GM10248 (cell line): ENCODE measurements at regions of chr10 and their contacts with region 1.

Region 1: GRCh38 chr10:101095542-101096213 is 33.9 kb downstream of the KAZALD1 start:
- DNase-seq: peak; percentile 86
- CTCF ChIP-seq: peak; percentile 84

Region 2: DNA sequence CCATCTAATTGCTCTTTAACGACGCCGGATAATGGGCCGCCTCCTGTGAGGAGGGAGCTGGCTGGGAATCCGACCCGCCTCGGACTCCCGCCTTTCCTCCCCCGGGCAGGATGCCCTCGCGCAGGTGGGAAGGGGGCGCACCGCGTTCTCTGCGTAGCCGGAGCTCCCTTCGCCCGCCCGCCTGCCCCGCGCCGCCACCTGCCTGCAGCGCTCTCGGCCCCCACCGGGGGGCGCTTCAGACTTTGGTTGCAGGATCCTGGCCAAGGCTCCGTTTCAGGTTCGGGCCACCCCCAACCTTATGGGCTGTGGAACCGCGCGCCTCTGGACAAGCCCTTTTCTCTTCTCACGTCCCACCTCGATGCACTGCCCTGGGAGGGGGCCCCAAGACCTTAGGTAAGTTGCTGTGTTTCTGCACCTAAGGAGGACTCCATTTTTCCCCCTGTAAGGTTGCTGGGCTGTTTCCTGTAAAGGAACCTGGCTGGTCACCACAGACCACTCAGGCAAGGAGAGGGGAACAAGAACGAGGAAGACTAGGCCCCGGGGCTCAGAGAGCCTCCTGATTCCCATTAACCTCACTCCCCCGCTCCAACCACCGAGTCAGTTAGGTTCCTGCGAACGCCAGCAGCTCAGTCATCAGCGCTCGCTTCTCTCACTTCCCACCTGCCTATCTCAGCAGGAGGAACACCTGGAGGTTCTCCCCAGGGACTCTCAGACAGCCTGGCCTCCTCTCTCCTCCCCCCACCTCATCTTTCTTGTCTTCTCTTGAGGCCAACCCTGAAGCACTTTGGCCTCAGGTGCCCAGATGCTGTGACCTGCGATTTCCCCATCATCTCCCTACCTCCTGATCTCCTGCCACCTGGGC is 45.2 kb before region 1 on chr10:
- CTCF ChIA-PET with region 1: interaction called, 23 read pairs
- POLR2A ChIA-PET with region 1: no interaction called
- DNase-seq: peak; percentile 85
- CTCF ChIP-seq: peak; percentile 82

Region 3: DNA sequence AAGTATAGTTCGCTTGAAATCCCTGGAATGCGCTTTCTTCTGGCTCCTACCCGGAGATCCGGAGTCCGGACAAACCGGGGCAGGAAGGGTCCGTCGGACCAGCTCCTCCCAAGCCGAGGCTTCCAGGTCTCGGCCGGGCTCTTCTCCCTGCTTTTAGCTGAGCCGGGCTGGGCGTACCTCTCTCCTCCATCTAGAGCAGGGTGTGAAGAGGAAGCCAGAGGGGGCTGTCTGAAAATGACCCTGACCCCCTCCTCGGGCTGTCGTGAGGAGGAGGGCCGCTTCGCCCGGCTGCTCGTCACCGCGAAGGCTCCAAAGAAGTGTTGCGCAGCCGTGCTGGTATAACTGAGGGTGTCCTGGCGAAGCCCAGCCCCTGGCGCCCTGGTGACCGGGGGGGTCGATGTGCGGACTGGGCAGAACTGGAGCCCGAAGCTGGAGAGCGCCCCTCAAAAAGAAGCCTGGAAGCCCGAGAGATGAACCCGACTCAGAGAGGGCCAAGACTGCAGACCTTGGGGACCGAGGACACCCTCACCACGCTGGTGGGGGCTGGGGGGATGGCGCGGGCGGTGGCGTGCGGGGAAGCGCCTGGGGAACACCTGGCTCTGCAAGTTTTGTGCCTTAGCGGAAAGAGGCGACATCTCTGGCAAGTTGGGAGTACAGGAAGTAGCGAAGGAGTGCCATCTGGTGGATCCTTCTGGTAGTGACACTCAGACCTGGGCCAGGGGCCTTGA is 28.2 kb before region 1 on chr10:
- CTCF ChIA-PET with region 1: interaction called, 12 read pairs
- POLR2A ChIA-PET with region 1: no interaction called
- DNase-seq: peak; percentile 84
- CTCF ChIP-seq: peak; percentile 78

Region 4: DNA sequence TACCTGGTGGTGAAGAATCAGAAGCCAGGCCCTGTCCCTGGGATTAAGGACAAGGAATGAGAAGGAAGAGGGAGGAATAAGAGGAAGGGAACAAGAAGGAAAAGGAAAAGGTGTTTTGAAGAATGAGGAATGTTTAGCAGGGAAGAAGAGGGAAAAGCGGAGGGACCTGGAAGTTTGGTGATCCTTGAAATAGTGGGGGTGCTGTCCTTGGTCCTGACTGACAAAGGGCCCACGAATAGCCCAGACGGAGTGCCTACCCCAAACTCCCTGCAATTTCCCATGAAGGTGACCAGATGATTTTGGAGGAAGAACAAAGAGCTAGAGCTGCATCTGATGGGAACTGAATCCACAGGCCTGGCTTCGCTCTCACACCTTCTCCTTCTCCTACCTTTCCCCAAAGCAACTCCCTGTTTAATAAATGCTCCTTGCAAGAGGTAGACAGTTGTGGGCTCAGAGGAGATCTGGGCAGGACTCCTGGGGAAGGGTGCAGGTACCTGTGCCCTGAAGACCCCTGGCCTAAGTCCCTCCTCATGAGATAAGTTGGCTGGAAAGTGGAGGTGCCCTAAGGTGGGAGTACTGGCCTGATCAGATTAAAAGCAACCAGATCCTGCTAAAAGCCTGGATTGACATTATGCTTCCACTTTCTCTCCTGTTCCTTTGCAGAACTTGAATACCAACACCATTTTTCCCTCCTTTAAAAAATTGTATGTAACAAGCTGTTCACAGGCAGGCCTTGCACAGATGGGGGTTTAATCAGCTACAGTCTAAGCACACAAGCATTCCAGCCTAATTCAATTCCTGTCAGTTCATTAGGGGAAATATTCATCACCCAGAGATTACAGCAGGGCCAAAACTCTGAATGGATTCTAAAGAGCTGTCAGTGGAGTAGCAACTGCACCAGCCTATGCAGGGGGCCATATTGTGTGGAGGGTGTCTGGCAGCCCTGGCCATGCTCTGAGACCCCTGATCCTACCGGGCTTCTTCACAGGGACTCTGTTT is 14.4 kb before region 1 on chr10:
- CTCF ChIA-PET with region 1: interaction called, 70 read pairs
- POLR2A ChIA-PET with region 1: no interaction called
- DNase-seq: peak; percentile 39
- CTCF ChIP-seq: no peak

Region 5: GRCh38 chr10:101110856-101111546 is 15.3 kb after region 1 on chr10:
- CTCF ChIA-PET with region 1: interaction called, 37 read pairs
- POLR2A ChIA-PET with region 1: no interaction called
- DNase-seq: no peak
- CTCF ChIP-seq: no peak

Region 6: DNA sequence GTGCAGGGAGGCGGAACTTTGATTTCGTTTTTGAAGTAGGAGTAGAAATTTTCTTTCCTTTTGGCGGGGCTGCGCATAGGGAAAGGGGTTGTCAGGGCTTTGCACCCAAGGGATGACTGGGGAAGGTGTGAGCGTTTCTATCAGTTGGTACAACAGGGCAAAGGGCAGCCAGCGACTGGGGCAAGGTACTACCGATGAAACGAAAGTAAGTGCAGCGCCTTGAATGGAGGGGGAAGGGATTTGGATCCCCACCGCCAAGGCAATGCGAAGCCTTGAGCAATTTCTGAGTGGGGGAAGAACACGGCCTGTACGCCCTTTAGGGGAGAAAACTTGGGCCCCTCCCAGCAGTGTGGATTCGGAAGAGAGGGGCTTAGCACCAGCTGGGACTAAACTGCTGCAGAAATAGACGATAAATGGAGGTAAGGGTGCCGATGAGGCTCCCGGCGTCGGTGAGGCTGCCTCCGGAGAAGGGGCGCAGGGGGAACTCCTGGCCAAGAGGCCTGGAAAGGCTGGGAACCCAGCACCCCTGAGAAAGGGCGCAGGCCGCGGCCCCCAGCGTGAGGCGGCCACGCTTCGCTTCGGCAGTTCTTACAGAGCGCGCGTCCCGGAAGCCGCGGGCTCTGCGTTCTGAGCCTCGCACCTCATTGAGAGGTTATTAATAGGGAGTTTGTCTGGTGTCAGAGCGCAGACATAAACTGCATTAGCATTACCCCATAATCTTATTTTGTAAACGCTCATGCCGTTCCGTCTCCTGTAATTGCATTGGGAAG is 25.4 kb after region 1 on chr10:
- CTCF ChIA-PET with region 1: interaction called, 50 read pairs
- POLR2A ChIA-PET with region 1: no interaction called
- DNase-seq: peak; percentile 64
- CTCF ChIP-seq: no peak

Region 7: GRCh38 chr10:101155896-101156295 is 60.2 kb after region 1 on chr10:
- CTCF ChIA-PET with region 1: interaction called, 16 read pairs
- POLR2A ChIA-PET with region 1: no interaction called
- DNase-seq: no peak
- CTCF ChIP-seq: no peak